Naive thymus-derived CD4-positive, alpha-beta T cell (primary cell): ENCODE measurements at regions of chr9 and their contacts with region 1.

Region 1: DNA sequence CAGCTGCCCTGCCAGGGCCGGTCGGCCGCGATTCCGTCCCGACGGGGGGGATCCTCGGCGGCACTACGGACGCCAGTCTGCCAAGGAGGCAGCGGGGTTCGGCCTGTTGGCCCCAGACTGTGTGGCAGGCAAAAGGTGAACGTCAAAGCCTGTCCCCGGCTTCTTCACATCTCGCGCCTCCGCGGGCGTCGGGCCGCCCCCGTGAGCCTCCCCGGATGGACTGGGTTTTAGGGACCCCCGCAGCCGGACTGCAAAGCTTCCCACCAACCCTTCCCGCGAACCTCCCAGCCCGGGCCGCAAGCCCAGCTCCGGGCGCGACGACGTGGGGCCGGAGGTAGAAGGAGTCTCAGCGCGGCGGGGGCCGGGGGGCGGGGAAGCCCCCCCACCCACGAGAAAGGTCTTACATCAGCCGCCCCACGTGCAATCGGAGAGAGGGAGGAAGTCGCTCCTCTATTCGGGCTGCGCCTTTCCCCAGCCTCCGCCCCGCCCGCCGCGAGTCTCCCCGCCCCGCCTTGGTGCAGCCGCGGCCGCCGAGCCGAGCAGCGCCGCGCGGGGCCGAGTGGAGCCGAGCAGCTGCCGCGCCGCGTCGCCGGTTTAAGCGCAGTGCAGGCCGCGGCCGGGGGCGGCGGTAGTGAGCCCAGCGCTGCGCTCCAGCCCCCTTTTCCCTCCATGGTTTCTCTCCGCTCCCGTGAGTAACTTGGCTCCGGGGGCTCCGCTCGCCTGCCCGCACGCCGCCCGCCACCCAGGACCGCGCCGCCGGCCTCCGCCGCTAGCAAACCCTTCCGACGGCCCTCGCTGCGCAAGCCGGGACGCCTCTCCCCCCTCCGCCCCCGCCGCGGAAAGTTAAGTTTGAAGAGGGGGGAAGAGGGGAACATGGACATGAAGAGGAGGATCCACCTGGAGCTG is at the start of gene ANP32B:
- DNase-seq: peak; percentile 94 to 97 (median 96)
- ATAC-seq: peak; percentile 90
- H3K4me3 ChIP-seq: peak within 1 kb of the TSS; percentile 85
- H3K4me3 Mint-ChIP-seq: peak within 1 kb of the TSS; percentile 79 to 92 (median 86)
- H3K27ac ChIP-seq: peak within 1 kb of the TSS; percentile 98
- H3K27ac Mint-ChIP-seq: peak within 1 kb of the TSS; percentile 25 to 94 (median 85)
- H3K4me1 ChIP-seq: peaks cover 30 to 51% of the 10 kb centered on the region in 2 donors
- H3K4me1 Mint-ChIP-seq: peaks cover 48 to 70% (median 63%) of the 10 kb centered on the region in 7 donors
- H3K27me3 ChIP-seq: no peaks in the 10 kb centered on the region
- H3K27me3 Mint-ChIP-seq: no peaks in the 10 kb centered on the region
- total RNA-seq, gene ANP32B: 143 to 267 (median 186) TPM

Region 2: DNA sequence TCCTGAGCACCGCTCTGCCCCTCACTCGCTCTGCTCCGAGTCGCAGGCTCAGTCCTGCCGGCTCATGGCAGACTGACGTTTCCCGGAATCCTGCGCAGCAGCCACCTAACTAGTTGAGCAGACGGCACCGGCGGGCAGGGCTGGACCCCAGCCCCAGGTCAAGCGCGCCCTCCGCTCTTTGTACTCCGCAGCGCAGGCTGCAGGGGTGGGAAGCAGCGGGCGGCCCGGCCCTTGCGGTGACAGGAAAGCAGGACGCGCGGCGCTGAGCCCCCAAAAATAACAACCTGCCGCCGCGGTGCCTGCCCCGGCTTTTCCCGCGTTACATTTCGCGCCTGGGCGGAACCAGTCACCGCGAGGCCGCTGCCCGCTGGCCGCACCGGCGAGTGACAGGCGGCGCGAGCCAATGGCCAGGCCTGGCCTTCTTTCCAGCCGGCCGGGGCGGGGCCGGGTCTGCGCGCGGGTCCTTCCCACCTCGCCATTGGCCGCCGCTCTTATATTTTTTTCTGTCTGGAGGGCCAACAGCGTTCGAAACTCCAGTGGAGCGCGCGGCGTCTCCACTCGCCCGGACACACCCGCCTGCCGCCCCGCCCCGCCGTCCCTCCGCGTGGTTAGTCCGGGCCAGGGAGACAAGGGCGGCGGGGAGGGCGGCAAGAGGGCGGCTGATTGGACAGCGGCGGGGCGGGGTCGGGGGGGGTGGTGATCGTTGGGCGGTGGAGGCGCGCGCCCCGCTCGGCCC is 1564.7 kb before region 1 on chr9 and contains the start of gene ZNF367:
- CTCF ChIA-PET with region 1: no interaction called
- POLR2A ChIA-PET with region 1: no interaction called
- intact Hi-C with region 1: loop called in 1 of 2 experiments (anchors 10 kb)
- DNase-seq: peak; percentile 75 to 94 (median 82)
- ATAC-seq: peak; percentile 85
- H3K4me3 ChIP-seq: peak within 1 kb of the TSS; percentile 94
- H3K4me3 Mint-ChIP-seq: peak within 1 kb of the TSS; percentile 88 to 98 (median 92)
- H3K27ac ChIP-seq: peak within 1 kb of the TSS; percentile 98
- H3K27ac Mint-ChIP-seq: peak within 1 kb of the TSS; percentile 92 to 98 (median 96)
- H3K4me1 ChIP-seq: peaks cover 19 to 31% of the 10 kb centered on the region in 2 donors
- H3K4me1 Mint-ChIP-seq: peaks cover 21 to 39% (median 31%) of the 10 kb centered on the region in 7 donors
- H3K27me3 ChIP-seq: no peaks in the 10 kb centered on the region
- H3K27me3 Mint-ChIP-seq: no peaks in the 10 kb centered on the region
- total RNA-seq, gene ZNF367: 3.8 to 22.9 (median 5.5) TPM

Region 3: GRCh38 chr9:97930972-97931371 is 52.0 kb before region 1 on chr9:
- CTCF ChIA-PET with region 1: interaction called, 13 read pairs
- POLR2A ChIA-PET with region 1: interaction called, 159 read pairs
- intact Hi-C with region 1: loop called (anchors 2 kb)
- DNase-seq: peak in 6 of 9 donors; percentile 41 to 62 (median 53)
- ATAC-seq: peak; percentile 56
- H3K4me3 ChIP-seq: peak overlapping the region; percentile 8
- H3K4me3 Mint-ChIP-seq: peak overlapping the region; percentile 26 to 89 (median 74)
- H3K27ac ChIP-seq: peak overlapping the region; percentile 67
- H3K27ac Mint-ChIP-seq: peak overlapping the region; percentile 78 to 94 (median 93)
- H3K4me1 ChIP-seq: peaks cover 20 to 56% of the 10 kb centered on the region in 2 donors
- H3K4me1 Mint-ChIP-seq: peaks cover 24 to 90% (median 69%) of the 10 kb centered on the region in 7 donors
- H3K27me3 ChIP-seq: no peaks in the 10 kb centered on the region
- H3K27me3 Mint-ChIP-seq: no peaks in the 10 kb centered on the region

Region 4: GRCh38 chr9:97966493-97966892 is 16.4 kb before region 1 on chr9:
- CTCF ChIA-PET with region 1: interaction called, 3 read pairs
- POLR2A ChIA-PET with region 1: interaction called, 47 read pairs
- intact Hi-C with region 1: loop called in 1 of 2 experiments (anchors 1 kb)
- DNase-seq: no peak
- ATAC-seq: no peak
- H3K4me3 ChIP-seq: no peak overlapping the region
- H3K4me3 Mint-ChIP-seq: no peak overlapping the region
- H3K27ac ChIP-seq: no peak overlapping the region
- H3K27ac Mint-ChIP-seq: peak overlapping the region in 1 of 9 donors; percentile 68
- H3K4me1 ChIP-seq: peaks cover 0 to 3% of the 10 kb centered on the region in 2 donors
- H3K4me1 Mint-ChIP-seq: peaks cover 4 to 16% (median 14%) of the 10 kb centered on the region in 7 donors
- H3K27me3 ChIP-seq: no peaks in the 10 kb centered on the region
- H3K27me3 Mint-ChIP-seq: peaks cover 0 to 15% (median 6%) of the 10 kb centered on the region in 5 donors

Region 5: DNA sequence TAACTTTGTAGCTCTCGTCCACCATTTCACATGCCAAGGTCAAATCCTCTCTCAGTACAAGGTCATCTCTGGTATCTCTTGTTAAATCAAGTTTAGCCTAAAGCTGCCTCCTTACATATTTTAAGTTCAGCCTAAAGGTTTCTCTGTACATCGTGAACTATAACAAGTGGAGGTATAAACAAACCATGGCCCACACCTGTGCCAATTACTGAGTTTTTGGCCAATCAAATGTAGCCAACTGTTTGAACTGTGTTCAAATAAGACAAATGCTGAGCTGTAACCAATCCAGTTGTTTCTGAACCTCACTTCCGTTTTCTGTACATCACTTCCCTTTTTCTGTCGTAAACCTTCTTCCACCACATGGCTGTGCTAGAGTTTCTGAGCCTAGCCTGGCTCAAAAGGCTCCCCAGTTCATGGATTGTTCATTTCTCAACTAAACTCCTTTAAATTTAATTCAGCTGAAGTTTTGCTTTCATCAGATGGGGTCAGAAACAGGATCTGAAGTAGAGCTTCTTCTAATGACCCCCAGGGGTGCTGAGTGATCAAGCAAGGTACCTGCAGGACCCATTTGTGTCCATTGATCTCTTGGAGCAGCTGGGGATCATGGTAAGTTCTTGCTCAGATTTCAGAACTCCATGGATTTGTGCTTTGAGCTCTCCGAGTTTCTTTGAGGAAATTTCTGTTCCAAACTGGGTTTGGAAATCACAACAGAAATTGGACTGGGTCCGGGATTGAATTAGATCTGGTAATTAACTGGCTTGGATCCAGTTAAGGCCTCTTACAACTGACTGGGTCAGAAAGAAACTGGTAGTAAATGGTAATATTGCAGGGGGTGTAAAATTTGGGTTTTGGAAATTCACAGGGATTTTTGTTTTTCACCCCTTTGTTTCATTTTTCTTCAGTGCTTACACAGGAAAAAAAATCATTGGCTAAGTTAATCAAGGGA is 62.6 kb after region 1 on chr9:
- CTCF ChIA-PET with region 1: interaction called, 4 read pairs
- POLR2A ChIA-PET with region 1: interaction called, 6 read pairs
- intact Hi-C with region 1: loop called (anchors 2 kb)
- DNase-seq: peak in 8 of 9 donors; percentile 27 to 83 (median 72)
- ATAC-seq: peak; percentile 96
- H3K4me3 ChIP-seq: peak overlapping the region; percentile 59
- H3K4me3 Mint-ChIP-seq: peak overlapping the region; percentile 77 to 95 (median 86)
- H3K27ac ChIP-seq: peak overlapping the region; percentile 49
- H3K27ac Mint-ChIP-seq: peak overlapping the region; percentile 85 to 99 (median 89)
- H3K4me1 ChIP-seq: peaks cover 0 to 8% of the 10 kb centered on the region in 2 donors
- H3K4me1 Mint-ChIP-seq: peaks cover 8 to 51% (median 41%) of the 10 kb centered on the region in 7 donors
- H3K27me3 ChIP-seq: no peaks in the 10 kb centered on the region
- H3K27me3 Mint-ChIP-seq: peaks cover 0 to 5% (median 0%) of the 10 kb centered on the region in 5 donors

Region 6: GRCh38 chr9:98118640-98119601 is 136.0 kb after region 1 on chr9 and contains the start of gene TRIM14:
- CTCF ChIA-PET with region 1: no interaction called
- POLR2A ChIA-PET with region 1: no interaction called
- intact Hi-C with region 1: loop called in 1 of 2 experiments (anchors 5 kb)
- DNase-seq: peak; percentile 23 to 79 (median 39)
- ATAC-seq: peak; percentile 64
- H3K4me3 ChIP-seq: peak within 1 kb of the TSS; percentile 78
- H3K4me3 Mint-ChIP-seq: peak within 1 kb of the TSS; percentile 81 to 100 (median 93)
- H3K27ac ChIP-seq: peak within 1 kb of the TSS; percentile 93
- H3K27ac Mint-ChIP-seq: peak within 1 kb of the TSS; percentile 95 to 100 (median 96)
- H3K4me1 ChIP-seq: peaks cover 26 to 39% of the 10 kb centered on the region in 2 donors
- H3K4me1 Mint-ChIP-seq: peaks cover 35 to 70% (median 58%) of the 10 kb centered on the region in 7 donors
- H3K27me3 ChIP-seq: no peaks in the 10 kb centered on the region
- H3K27me3 Mint-ChIP-seq: no peaks in the 10 kb centered on the region
- total RNA-seq, gene TRIM14: 54.1 to 114 (median 79.7) TPM

Region 7: DNA sequence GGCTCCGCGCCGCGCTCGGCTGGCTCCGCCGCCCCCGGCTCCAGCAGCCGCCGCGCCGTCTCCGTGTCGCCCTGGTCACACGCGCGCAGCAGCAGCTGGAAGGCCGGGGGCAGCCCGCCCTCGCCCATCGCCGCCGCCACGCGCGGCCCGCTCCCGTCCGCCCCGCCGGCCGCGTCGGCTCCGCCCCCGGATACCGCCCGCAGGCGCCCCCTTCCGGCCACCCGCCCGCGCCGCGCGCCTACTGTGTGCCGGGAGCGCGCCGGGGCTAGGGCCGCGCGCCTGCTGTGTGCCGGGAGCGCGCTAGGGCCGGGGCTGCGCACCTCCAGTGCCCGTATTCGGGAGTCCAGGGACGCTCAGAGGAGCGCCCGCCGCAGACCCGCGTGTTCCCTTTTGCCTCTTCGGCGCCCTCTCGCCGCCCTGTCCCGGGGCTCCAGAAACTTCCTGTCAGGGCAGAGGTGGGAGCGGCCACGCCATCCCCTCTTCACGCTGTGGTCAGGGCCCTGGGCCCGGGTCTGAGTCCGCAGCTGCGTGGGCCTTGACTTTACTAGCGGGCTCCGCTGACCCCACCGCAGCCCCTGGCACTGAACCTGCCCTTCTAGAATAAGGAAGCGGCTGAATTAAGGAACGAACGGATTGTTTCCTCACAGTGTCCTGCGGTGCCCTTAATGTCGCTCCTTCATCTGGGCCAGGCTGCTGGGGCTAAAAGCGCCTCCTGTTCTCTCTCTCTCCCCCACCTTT is 813.6 kb after region 1 on chr9 and contains the start of gene ANKS6:
- CTCF ChIA-PET with region 1: no interaction called
- POLR2A ChIA-PET with region 1: no interaction called
- intact Hi-C with region 1: loop called in 1 of 2 experiments (anchors 5 kb)
- DNase-seq: peak; percentile 67 to 95 (median 84)
- ATAC-seq: peak; percentile 98
- H3K4me3 ChIP-seq: peak within 1 kb of the TSS; percentile 87
- H3K4me3 Mint-ChIP-seq: peak within 1 kb of the TSS; percentile 87 to 94 (median 90)
- H3K27ac ChIP-seq: peak within 1 kb of the TSS; percentile 74
- H3K27ac Mint-ChIP-seq: peak within 1 kb of the TSS; percentile 63 to 90 (median 87)
- H3K4me1 ChIP-seq: peaks cover 6 to 12% of the 10 kb centered on the region in 2 donors
- H3K4me1 Mint-ChIP-seq: peaks cover 21 to 37% (median 32%) of the 10 kb centered on the region in 7 donors
- H3K27me3 ChIP-seq: no peaks in the 10 kb centered on the region
- H3K27me3 Mint-ChIP-seq: peaks cover 0 to 23% (median 0%) of the 10 kb centered on the region in 5 donors
- total RNA-seq, gene ANKS6: 8.1 to 18.4 (median 13.5) TPM